ENCODE measurements at regions of chr5 and their contacts with region 1.

Region 1: GRCh38 chr5:38226091-38226490 is 32.3 kb upstream of the EGFLAM start:
- DNase-seq: no peak

Region 2: DNA sequence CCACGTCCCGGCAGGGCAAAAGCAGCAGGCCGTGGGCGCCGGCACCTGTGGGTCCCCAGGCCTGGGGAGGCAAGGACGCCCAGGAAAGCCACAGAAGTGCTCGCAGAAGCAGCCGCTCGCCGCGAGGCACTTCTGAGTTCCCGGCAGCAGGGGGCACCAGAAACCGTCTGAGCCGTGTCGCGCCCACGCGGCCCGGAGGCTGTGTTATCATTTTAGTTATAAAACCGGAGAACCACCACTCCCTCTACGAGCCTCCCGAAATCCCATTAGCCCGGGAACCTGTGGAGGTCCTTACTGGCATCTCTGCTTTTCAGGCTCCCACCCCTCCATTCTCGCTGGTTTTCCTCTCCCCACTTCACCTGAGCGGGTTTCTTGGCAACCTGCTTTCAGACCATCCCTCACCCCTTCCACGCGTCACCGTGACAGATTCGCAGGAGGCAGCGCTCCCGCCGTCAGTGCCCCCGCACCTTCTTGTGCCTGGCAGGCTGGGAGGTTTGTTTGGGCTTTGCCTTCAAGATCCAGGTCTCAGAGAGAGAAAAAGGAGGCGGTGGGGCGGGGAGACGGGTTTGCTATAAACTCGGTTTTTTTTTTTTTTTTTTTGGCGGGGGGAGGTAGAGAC is 388.6 kb before region 1 on chr5:
- intact Hi-C with region 1: no loop called
- DNase-seq: peak; percentile 93

Region 3: DNA sequence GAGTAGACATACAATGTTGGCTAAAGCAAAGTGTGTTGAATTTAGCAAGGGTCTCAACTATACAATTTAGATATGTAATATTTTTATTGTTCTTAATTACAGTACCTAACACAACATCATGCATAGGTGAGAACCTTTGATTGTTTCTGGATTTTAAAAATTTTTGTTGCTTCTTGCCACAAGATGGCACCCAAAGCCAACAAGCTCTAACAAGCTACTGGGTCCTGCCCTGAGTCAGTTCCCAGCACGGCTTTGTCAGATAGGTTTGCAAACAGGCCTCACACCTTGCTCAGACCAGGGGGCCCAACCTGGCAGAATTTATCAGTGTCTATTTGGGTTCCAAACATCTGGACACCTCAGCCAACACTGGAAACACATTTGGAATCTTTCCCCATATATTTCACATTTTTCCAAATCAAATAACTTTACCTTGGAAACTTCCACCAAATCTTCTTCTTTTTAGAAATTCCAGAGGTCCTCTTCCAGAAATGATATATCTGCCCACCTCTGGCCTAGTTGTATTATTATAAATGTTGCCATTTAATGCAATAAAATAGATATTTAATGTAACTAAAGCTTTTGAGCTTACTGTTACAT is 17.2 kb before region 1 on chr5:
- intact Hi-C with region 1: loop called in 1 of 2 experiments (anchors 1 kb)
- DNase-seq: no peak

Measured in posterior vena cava (tissue), 2 donors.